Caco-2 (cell line): ENCODE measurements at regions of chr10 and their contacts with region 1.

Region 1: GRCh38 chr10:73879296-73880173 is 5.2 kb upstream of the CAMK2G start:
- DNase-seq: peak; percentile 83 to 91
- H3K4me3 ChIP-seq: no peak overlapping the region
- H3K4me3 Mint-ChIP-seq: no peak overlapping the region
- H3K27ac Mint-ChIP-seq: no peak overlapping the region
- H3K4me1 ChIP-seq: peaks cover 25% of the 10 kb centered on the region
- H3K4me1 Mint-ChIP-seq: peaks cover 17% of the 10 kb centered on the region
- H3K27me3 ChIP-seq: no peaks in the 10 kb centered on the region
- H3K27me3 Mint-ChIP-seq: no peaks in the 10 kb centered on the region
- CTCF ChIP-seq: peak; percentile 91 to 95

Region 2: GRCh38 chr10:73840056-73840402 is 39.5 kb before region 1 on chr10:
- CTCF ChIA-PET with region 1: interaction called, 18 read pairs
- POLR2A ChIA-PET with region 1: interaction called, 3 read pairs
- intact Hi-C with region 1: no loop called
- DNase-seq: peak in 1 of 2 experiments; percentile 19
- H3K4me3 ChIP-seq: no peak overlapping the region
- H3K4me3 Mint-ChIP-seq: no peak overlapping the region
- H3K27ac Mint-ChIP-seq: peak overlapping the region; percentile 15
- H3K4me1 ChIP-seq: no peaks in the 10 kb centered on the region
- H3K4me1 Mint-ChIP-seq: no peaks in the 10 kb centered on the region
- H3K27me3 ChIP-seq: no peaks in the 10 kb centered on the region
- H3K27me3 Mint-ChIP-seq: no peaks in the 10 kb centered on the region
- CTCF ChIP-seq: no peak

Region 3: GRCh38 chr10:73920089-73920488 is 40.6 kb after region 1 on chr10:
- CTCF ChIA-PET with region 1: no interaction called
- POLR2A ChIA-PET with region 1: no interaction called
- intact Hi-C with region 1: no loop called
- DNase-seq: no peak
- H3K4me3 ChIP-seq: no peak overlapping the region
- H3K4me3 Mint-ChIP-seq: no peak overlapping the region
- H3K27ac Mint-ChIP-seq: no peak overlapping the region
- H3K4me1 ChIP-seq: no peaks in the 10 kb centered on the region
- H3K4me1 Mint-ChIP-seq: peaks cover 6% of the 10 kb centered on the region
- H3K27me3 ChIP-seq: no peaks in the 10 kb centered on the region
- H3K27me3 Mint-ChIP-seq: no peaks in the 10 kb centered on the region
- CTCF ChIP-seq: no peak